Transverse colon (tissue), 4 donors: ENCODE measurements at regions of chr11 and their contacts with region 1.

Region 1: DNA sequence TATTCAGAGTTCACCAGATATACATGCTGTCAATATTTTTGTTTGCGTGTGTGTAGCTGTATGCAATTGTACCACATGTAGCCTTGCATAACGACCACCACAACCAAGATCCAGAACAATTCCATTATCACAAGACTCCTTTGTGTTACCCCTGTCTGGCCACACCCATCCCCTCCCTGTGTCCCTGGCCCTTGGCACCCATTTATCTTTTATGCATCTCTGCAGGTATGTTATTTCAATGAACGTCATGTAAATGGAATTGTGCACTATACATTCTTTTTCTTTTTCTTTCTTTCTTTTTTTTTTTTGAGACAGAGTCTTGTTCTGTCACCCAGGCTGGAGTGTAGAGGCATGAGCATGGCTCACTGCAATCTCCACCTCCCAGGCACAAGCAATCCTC is 9.7 kb upstream of the PAFAH1B2 start:
- DNase-seq: no peak
- H3K4me3 ChIP-seq: no peak overlapping the region
- H3K27ac ChIP-seq: no peak overlapping the region
- H3K4me1 ChIP-seq: no peaks in the 10 kb centered on the region
- H3K27me3 ChIP-seq: no peaks in the 10 kb centered on the region
- CTCF ChIP-seq: no peak
- EP300 ChIP-seq: no peak
- POLR2A ChIP-seq: no peak

Region 2: GRCh38 chr11:117121176-117121575 is 13.3 kb before region 1 on chr11:
- in situ Hi-C with region 1: no loop called
- intact Hi-C with region 1: no loop called
- DNase-seq: no peak
- H3K4me3 ChIP-seq: no peak overlapping the region
- H3K27ac ChIP-seq: no peak overlapping the region
- H3K4me1 ChIP-seq: no peaks in the 10 kb centered on the region
- H3K27me3 ChIP-seq: no peaks in the 10 kb centered on the region
- CTCF ChIP-seq: no peak
- EP300 ChIP-seq: no peak
- POLR2A ChIP-seq: no peak

Region 3: GRCh38 chr11:117205211-117205818 is 70.9 kb after region 1 on chr11:
- in situ Hi-C with region 1: no loop called
- intact Hi-C with region 1: loop called (anchors 5 kb)
- DNase-seq: no peak
- H3K4me3 ChIP-seq: no peak overlapping the region
- H3K27ac ChIP-seq: peak overlapping the region; percentile 84 to 96 (median 88)
- H3K4me1 ChIP-seq: peaks cover 0 to 29% (median 0%) of the 10 kb centered on the region in 4 donors
- H3K27me3 ChIP-seq: no peaks in the 10 kb centered on the region
- CTCF ChIP-seq: no peak
- EP300 ChIP-seq: no peak
- POLR2A ChIP-seq: no peak

Region 4: GRCh38 chr11:117817368-117818040 is 683.1 kb after region 1 on chr11:
- in situ Hi-C with region 1: no loop called
- intact Hi-C with region 1: no loop called
- DNase-seq: peak; percentile 88
- H3K4me3 ChIP-seq: no peak overlapping the region
- H3K27ac ChIP-seq: peak overlapping the region; percentile 75 to 79 (median 76)
- H3K4me1 ChIP-seq: peaks cover 25 to 63% (median 49%) of the 10 kb centered on the region in 4 donors
- H3K27me3 ChIP-seq: no peaks in the 10 kb centered on the region
- CTCF ChIP-seq: peak; percentile 99 to 100 (median 100)
- EP300 ChIP-seq: no peak
- POLR2A ChIP-seq: no peak